IMR-90 (cell line): ENCODE measurements at regions of chr17 and their contacts with region 1.

Region 1: DNA sequence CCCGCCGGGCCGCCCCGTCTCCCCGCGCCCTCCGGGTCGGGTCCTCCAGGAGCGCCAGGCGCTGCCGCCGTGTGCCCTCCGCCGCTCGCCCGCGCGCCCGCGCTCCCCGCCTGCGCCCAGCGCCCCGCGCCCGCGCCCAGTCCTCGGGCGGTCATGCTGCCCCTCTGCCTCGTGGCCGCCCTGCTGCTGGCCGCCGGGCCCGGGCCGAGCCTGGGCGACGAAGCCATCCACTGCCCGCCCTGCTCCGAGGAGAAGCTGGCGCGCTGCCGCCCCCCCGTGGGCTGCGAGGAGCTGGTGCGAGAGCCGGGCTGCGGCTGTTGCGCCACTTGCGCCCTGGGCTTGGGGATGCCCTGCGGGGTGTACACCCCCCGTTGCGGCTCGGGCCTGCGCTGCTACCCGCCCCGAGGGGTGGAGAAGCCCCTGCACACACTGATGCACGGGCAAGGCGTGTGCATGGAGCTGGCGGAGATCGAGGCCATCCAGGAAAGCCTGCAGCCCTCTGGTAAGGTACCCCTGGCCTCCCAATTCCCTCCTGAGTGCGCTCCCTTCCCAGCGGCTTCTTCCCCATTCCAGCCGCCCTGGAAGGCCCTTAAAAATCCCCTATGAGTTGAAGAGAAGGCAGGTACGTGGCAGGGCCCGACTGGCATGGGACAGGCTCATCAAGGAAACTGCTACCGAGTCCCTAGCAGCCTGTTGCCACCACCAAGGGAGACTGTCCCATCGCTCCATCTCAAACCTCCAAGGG is 505 bp downstream of the IGFBP4 start:
- DNase-seq: peak; percentile 71
- ATAC-seq: peak; percentile 57
- H3K4me3 ChIP-seq: peak overlapping the region; percentile 98
- H3K27ac ChIP-seq: peak overlapping the region; percentile 80
- H3K4me1 ChIP-seq: peaks cover 24% of the 10 kb centered on the region
- H3K27me3 ChIP-seq: no peaks in the 10 kb centered on the region
- CTCF ChIP-seq: peak; percentile 54
- POLR2A ChIP-seq: 0 out of 2 replicates have a peak, but pooled peaks have one; percentile 22
- RAD21 ChIP-seq: peak; percentile 49

Region 2: DNA sequence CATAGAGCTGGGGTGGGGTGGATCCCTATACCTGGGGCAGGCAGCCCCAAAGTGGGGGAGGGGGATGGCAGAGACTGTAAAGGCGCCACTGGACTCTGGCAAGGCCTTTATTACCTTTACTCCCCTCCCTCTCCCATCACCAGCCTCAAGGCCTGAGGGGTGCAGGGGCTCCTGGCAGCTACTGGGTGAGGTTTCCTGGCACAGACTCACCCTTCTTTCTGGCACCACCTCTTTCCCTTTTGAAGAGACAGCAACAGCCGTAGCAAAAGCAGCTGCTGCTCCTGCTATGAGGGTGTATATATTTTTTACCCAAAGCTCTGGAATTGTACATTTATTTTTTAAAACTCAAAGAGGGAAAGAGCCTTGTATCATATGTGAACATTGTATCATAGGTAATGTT is 248.9 kb before region 1 on chr17:
- CTCF ChIA-PET with region 1: no interaction called
- POLR2A ChIA-PET with region 1: no interaction called
- dilution Hi-C with region 1: no loop called
- in situ Hi-C with region 1: no loop called
- intact Hi-C with region 1: no loop called
- DNase-seq: no peak
- ATAC-seq: no peak
- H3K4me3 ChIP-seq: no peak overlapping the region
- H3K27ac ChIP-seq: no peak overlapping the region
- H3K4me1 ChIP-seq: peaks cover 7% of the 10 kb centered on the region; the same call in 1 of the 2 replicates
- H3K27me3 ChIP-seq: no peaks in the 10 kb centered on the region
- CTCF ChIP-seq: no peak
- POLR2A ChIP-seq: no peak
- RAD21 ChIP-seq: no peak

Region 3: DNA sequence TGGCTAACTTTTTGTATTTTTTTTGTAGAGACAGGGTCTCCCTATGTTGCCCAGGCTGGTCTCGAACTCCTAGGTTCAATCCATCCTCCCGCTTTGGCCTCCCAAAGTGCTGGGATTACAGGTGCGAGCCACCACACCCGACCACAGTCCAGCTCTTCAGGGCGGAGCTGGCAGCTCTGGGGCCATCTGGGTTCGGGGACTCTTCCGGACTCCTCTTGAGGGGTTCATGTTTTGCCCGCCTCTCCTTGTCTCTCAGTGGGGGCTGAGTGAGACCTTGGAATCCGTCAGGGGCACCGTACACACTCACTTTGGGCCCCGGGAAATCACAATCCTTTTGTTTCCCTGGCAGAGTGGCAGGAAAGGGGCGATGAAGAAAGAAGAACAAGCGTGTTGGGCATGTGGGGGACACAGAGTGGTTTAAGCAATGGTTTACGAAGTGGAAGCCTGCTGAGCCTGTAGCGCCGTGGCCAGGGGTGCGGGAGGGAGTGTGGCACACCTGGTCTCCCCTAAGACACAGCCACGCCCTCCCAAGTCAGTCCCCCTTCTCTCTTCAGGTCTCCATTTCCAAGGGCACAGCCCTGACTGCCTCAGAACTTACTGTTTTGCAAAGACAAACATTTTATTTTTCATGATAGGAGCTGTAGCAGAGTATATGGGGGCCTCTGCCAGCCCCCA is 31.6 kb after region 1 on chr17:
- CTCF ChIA-PET with region 1: interaction called, 11 read pairs
- POLR2A ChIA-PET with region 1: interaction called, 4 read pairs
- dilution Hi-C with region 1: no loop called
- in situ Hi-C with region 1: no loop called
- intact Hi-C with region 1: loop called (anchors 1 kb)
- DNase-seq: no peak
- ATAC-seq: no peak
- H3K4me3 ChIP-seq: no peak overlapping the region
- H3K27ac ChIP-seq: peak overlapping the region; percentile 40
- H3K4me1 ChIP-seq: peaks cover 25% of the 10 kb centered on the region
- H3K27me3 ChIP-seq: no peaks in the 10 kb centered on the region
- CTCF ChIP-seq: no peak
- POLR2A ChIP-seq: no peak
- RAD21 ChIP-seq: no peak

Region 4: GRCh38 chr17:40480501-40481003 is 36.8 kb after region 1 on chr17:
- CTCF ChIA-PET with region 1: interaction called, 11 read pairs
- POLR2A ChIA-PET with region 1: interaction called, 4 read pairs
- dilution Hi-C with region 1: no loop called
- in situ Hi-C with region 1: no loop called
- intact Hi-C with region 1: loop called (anchors 1 kb)
- DNase-seq: no peak
- ATAC-seq: no peak
- H3K4me3 ChIP-seq: no peak overlapping the region
- H3K27ac ChIP-seq: no peak overlapping the region; the same call in 1 of the 2 replicates
- H3K4me1 ChIP-seq: peaks cover 24% of the 10 kb centered on the region
- H3K27me3 ChIP-seq: no peaks in the 10 kb centered on the region
- CTCF ChIP-seq: no peak
- POLR2A ChIP-seq: no peak
- RAD21 ChIP-seq: no peak

Region 5: GRCh38 chr17:40490289-40490853 is 46.6 kb after region 1 on chr17:
- CTCF ChIA-PET with region 1: interaction called, 4 read pairs
- POLR2A ChIA-PET with region 1: interaction called, 13 read pairs
- dilution Hi-C with region 1: no loop called
- in situ Hi-C with region 1: no loop called
- intact Hi-C with region 1: no loop called
- DNase-seq: peak; percentile 81
- ATAC-seq: peak; percentile 47
- H3K4me3 ChIP-seq: no peak overlapping the region
- H3K27ac ChIP-seq: peak overlapping the region; percentile 49
- H3K4me1 ChIP-seq: peaks cover 42% of the 10 kb centered on the region
- H3K27me3 ChIP-seq: no peaks in the 10 kb centered on the region
- CTCF ChIP-seq: no peak
- POLR2A ChIP-seq: no peak
- RAD21 ChIP-seq: peak; percentile 13; the same call in 1 of the 2 replicates

Region 6: GRCh38 chr17:40531051-40531991 is 87.6 kb after region 1 on chr17:
- CTCF ChIA-PET with region 1: interaction called, 7 read pairs
- POLR2A ChIA-PET with region 1: interaction called, 5 read pairs
- dilution Hi-C with region 1: no loop called
- in situ Hi-C with region 1: loop called (anchors 5 kb)
- intact Hi-C with region 1: loop called (anchors 1 kb)
- DNase-seq: no peak
- ATAC-seq: no peak
- H3K4me3 ChIP-seq: no peak overlapping the region
- H3K27ac ChIP-seq: peak overlapping the region; percentile 21
- H3K4me1 ChIP-seq: peaks cover 37% of the 10 kb centered on the region
- H3K27me3 ChIP-seq: no peaks in the 10 kb centered on the region
- CTCF ChIP-seq: no peak
- POLR2A ChIP-seq: no peak
- RAD21 ChIP-seq: no peak

Region 7: GRCh38 chr17:40542558-40543411 is 99.0 kb after region 1 on chr17:
- CTCF ChIA-PET with region 1: interaction called, 3 read pairs
- POLR2A ChIA-PET with region 1: interaction called, 11 read pairs
- dilution Hi-C with region 1: no loop called
- in situ Hi-C with region 1: no loop called
- intact Hi-C with region 1: no loop called
- DNase-seq: peak; percentile 99
- ATAC-seq: peak; percentile 93
- H3K4me3 ChIP-seq: no peak overlapping the region
- H3K27ac ChIP-seq: peak overlapping the region; percentile 95
- H3K4me1 ChIP-seq: peaks cover 38% of the 10 kb centered on the region
- H3K27me3 ChIP-seq: no peaks in the 10 kb centered on the region
- CTCF ChIP-seq: no peak
- POLR2A ChIP-seq: peak; percentile 73
- RAD21 ChIP-seq: peak; percentile 5; the same call in 1 of the 2 replicates

Region 8: GRCh38 chr17:40559954-40560591 is 116.3 kb after region 1 on chr17:
- CTCF ChIA-PET with region 1: interaction called, 7 read pairs
- POLR2A ChIA-PET with region 1: interaction called, 4 read pairs
- dilution Hi-C with region 1: no loop called
- in situ Hi-C with region 1: no loop called
- intact Hi-C with region 1: loop called (anchors 1 kb)
- DNase-seq: peak; percentile 94
- ATAC-seq: peak; percentile 97
- H3K4me3 ChIP-seq: no peak overlapping the region
- H3K27ac ChIP-seq: peak overlapping the region; percentile 69
- H3K4me1 ChIP-seq: peaks cover 28% of the 10 kb centered on the region
- H3K27me3 ChIP-seq: peaks cover 25% of the 10 kb centered on the region
- CTCF ChIP-seq: peak; percentile 99
- POLR2A ChIP-seq: peak; percentile 62
- RAD21 ChIP-seq: peak; percentile 100

Region 9: DNA sequence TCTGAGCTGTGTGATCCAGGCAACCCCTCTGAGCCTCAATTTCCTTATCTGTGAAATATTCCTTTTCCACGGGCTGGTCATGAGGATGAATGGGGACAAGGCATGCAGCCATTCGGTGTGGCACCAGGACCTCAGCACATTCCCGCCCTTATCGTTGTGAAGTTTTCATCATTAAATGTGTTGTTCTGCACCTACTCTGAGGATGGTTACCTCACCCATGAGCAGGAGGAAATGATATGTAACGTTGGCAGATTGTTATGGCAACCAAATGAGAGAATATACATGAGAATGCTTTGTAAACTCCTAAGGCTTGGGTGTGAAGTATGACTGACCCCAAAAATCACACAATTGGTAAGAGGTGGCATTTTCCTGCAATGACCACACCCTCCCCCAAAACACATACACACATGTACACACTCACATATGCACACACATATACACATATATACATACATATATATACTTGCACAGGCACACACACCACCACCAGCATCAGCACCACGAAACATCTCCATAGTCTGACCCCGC is 164.4 kb after region 1 on chr17:
- CTCF ChIA-PET with region 1: no interaction called
- POLR2A ChIA-PET with region 1: no interaction called
- dilution Hi-C with region 1: no loop called
- in situ Hi-C with region 1: no loop called
- intact Hi-C with region 1: no loop called
- DNase-seq: no peak
- ATAC-seq: no peak
- H3K4me3 ChIP-seq: no peak overlapping the region
- H3K27ac ChIP-seq: no peak overlapping the region
- H3K4me1 ChIP-seq: no peaks in the 10 kb centered on the region; the same call in 1 of the 2 replicates
- H3K27me3 ChIP-seq: peaks cover 57% of the 10 kb centered on the region
- CTCF ChIP-seq: no peak
- POLR2A ChIP-seq: no peak
- RAD21 ChIP-seq: no peak